ENCODE measurements at regions of chr7 and their contacts with region 1.

Region 1: GRCh38 chr7:141102436-141102835 is 28.6 kb downstream of the TMEM178B start:
- DNase-seq: peak in 2 of 10 donors; percentile 10 to 14

Region 2: GRCh38 chr7:141208539-141208938 is 106.1 kb after region 1 on chr7:
- intact Hi-C with region 1: loop called (anchors 10 kb)
- DNase-seq: no peak

Measured in posterior cingulate gyrus (tissue), 11 donors.